Activated T-helper 2 cell treated with anti-CD3 and anti-CD28 coated beads, Interferon-gamma antibody, Interleukin-2, Interleukin-4, amounts not matched to agents 10 μg/mL and 5 μg/mL and 100 μg/mL, durations not matched to agents 14 hours and 24 hours and 36 hours (primary cell): ENCODE measurements at regions of chr4 and their contacts with region 1.

Region 1: GRCh38 chr4:6986781-6987587 is 56.2 kb upstream of the TADA2B start:
- DNase-seq: peak; percentile 91
- H3K4me3 Mint-ChIP-seq: peak overlapping the region; percentile 98
- H3K27ac Mint-ChIP-seq: peak overlapping the region; percentile 92
- H3K4me1 Mint-ChIP-seq: peaks cover 58% of the 10 kb centered on the region
- H3K27me3 Mint-ChIP-seq: no peaks in the 10 kb centered on the region

Region 2: GRCh38 chr4:6783053-6783981 is 203.7 kb before region 1 on chr4:
- intact Hi-C with region 1: loop called (anchors 2 kb)
- DNase-seq: peak; percentile 86
- H3K4me3 Mint-ChIP-seq: peak overlapping the region; percentile 79
- H3K27ac Mint-ChIP-seq: peak overlapping the region; percentile 75
- H3K4me1 Mint-ChIP-seq: peaks cover 55% of the 10 kb centered on the region
- H3K27me3 Mint-ChIP-seq: no peaks in the 10 kb centered on the region

Region 3: DNA sequence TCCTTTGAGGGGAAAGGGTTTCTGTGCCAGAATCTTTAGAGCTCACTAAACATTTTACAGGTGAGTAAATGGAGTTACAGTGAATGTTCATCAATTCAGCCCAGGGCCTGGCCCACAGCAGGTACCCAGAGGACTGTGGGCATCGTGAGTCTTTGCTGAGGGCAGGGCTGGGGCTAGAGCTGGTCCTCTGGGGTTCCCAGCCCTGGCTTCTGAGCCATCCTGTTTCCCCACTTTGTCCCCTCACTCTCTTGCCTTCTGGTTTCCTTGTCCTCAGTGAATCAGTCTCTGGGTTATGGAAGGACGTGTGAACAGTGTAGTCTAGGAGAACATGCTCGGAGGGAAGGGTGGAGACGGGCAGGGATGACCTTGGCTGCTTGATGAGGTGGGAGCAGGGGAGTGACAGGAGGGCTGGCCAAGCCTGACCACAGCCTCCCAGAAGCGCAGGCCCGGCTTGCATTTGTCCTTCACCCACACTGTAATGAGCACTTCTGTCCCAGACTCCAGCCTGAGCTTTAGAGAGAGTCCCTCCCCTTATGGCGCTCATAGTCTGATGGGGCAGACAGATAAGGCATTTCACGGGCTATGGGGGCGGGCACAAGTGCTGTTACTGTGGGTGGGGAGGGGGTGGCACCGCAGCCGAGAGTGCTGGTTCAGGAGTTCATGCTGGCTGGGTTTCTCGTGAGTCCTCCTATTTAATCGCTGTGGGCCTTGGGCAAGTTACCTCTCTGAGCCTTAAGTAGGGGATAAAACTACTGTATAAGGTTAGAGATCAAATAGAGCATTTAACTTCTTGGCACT is 60.1 kb before region 1 on chr4:
- intact Hi-C with region 1: loop called (anchors 5 kb)
- DNase-seq: peak; percentile 48
- H3K4me3 Mint-ChIP-seq: peak overlapping the region; percentile 62
- H3K27ac Mint-ChIP-seq: peak overlapping the region; percentile 36
- H3K4me1 Mint-ChIP-seq: peaks cover 39% of the 10 kb centered on the region
- H3K27me3 Mint-ChIP-seq: no peaks in the 10 kb centered on the region

Region 4: GRCh38 chr4:7004331-7004730 is 17.3 kb after region 1 on chr4:
- intact Hi-C with region 1: no loop called
- DNase-seq: no peak
- H3K4me3 Mint-ChIP-seq: no peak overlapping the region
- H3K27ac Mint-ChIP-seq: no peak overlapping the region
- H3K4me1 Mint-ChIP-seq: peaks cover 13% of the 10 kb centered on the region
- H3K27me3 Mint-ChIP-seq: no peaks in the 10 kb centered on the region

Region 5: DNA sequence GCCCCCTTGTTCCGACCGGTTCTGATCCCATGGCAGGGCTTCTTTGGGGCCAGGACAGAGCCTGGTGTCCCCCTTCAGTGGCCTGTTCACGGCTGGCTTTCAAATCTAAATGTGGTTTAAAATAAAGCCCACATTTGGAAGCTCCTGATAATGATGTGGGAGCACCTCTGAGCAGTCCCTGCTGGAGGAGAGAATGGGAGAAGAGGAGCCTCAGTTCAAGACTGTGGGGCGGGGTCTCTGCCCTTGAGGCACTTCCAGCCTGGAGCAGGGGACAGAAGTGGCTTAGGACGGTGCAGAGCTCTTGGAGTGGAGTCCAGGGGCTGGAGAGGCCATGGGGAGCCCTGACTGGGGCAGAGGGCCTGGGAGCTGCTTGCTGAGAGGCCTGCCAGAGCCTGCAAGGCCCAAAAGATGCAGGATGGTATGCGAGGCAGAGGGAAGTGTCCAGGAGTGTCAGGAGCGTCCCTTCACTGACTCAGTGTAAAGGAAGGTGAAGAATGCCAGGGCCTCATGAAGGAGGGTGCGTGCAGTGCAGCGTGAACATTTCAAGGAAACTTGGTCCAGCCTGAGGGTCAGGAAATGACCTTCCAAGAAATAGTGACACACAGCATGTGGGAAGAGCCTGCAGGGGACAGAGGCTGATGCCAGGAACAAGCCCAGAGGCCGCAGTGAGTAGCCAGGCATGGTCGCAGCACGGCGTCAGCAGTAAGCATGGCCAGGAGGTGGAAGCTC is 35.1 kb after region 1 on chr4:
- intact Hi-C with region 1: no loop called
- DNase-seq: no peak
- H3K4me3 Mint-ChIP-seq: no peak overlapping the region
- H3K27ac Mint-ChIP-seq: no peak overlapping the region
- H3K4me1 Mint-ChIP-seq: no peaks in the 10 kb centered on the region
- H3K27me3 Mint-ChIP-seq: no peaks in the 10 kb centered on the region

Region 6: DNA sequence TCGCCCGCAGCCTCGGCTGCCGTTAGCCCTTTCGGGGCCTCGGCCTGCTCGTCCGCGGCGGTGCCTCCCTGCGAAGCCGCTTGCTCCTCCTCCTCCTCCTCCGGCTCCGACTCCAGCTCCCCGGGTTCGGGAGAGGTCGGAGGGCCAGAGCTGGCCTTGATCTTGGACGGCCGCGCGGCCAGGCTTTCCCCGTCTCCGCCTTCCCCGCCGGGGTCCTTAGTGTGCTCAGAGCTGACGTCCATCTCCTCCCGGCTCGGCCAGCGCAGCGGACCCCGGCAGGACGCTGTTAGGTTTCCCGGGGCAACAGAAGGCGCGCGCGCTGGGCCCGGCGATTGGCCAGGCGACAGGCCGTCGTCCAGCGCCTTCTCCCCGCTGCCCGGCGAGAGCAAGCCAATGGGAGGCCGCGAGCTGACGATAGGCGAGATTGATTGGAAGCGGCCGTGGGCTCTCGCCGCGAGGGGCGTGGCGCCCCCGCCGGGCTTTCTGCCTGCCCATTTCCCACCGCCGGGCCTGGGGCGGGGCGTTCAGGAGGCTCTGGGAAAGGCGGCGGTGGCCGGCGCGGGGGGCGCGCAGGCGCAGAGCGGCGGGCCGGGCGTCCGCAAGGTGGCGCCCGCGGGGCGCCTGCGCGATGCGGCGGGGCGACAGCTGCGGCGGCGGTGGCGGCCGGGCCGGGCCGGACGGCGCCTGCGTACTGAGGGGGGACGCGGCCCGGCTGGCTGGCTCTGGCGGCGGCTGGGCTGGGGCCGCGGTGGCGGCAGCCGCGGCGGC is 55.9 kb after region 1 on chr4 and contains the start of gene TADA2B:
- intact Hi-C with region 1: loop called (anchors 1 kb)
- DNase-seq: peak; percentile 94
- H3K4me3 Mint-ChIP-seq: peak within 1 kb of the TSS; percentile 86
- H3K27ac Mint-ChIP-seq: peak within 1 kb of the TSS; percentile 65
- H3K4me1 Mint-ChIP-seq: peaks cover 38% of the 10 kb centered on the region
- H3K27me3 Mint-ChIP-seq: peaks cover 7% of the 10 kb centered on the region
- total RNA-seq, gene TADA2B: 12.9 and 13.3 TPM in 2 replicates

Region 7: DNA sequence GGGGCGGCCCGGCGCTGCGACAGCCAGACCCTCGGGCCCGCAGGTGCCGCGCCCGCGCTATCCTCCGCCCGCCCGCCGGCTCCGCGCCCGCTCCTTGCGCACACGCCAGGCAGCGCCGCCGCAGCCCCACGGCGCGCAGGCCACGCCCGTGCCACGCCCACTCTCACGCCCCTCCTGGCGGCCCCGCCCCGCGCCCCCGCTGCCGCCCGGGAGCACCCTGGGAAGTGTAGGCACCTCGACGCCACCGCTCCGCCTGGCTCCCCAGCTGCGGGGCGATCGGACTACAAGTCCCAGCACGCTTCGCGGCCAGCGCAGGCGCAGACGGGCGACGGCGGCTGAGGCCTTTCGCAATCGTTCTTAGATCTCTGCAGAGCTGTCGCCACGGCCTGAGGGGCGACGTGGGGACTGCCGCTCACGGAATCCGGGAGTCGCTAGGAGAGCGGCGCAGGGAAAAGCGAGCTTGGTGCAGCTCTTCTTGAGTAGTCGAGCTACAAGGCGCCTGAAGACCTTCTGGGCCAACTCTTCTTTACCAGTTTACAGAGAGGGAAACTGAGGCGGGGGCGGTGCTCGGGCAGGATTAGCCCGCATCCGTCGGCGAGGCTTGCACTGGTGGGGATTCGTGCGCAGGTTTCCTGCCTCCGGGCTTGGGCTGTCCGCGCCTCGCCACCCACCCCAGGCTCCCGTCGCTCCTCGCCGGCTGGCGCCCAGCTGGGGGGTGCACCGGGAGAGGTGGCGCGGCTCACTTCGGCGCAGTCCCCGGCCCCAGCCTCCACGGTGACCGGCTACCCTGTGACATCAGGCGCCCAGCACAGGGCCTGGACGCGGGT is 1171.9 kb after region 1 on chr4 and contains the start of gene ABLIM2:
- intact Hi-C with region 1: loop called (anchors 2 kb)
- DNase-seq: peak; percentile 98
- H3K4me3 Mint-ChIP-seq: peak within 1 kb of the TSS; percentile 97
- H3K27ac Mint-ChIP-seq: peak within 1 kb of the TSS; percentile 24
- H3K4me1 Mint-ChIP-seq: peaks cover 5% of the 10 kb centered on the region
- H3K27me3 Mint-ChIP-seq: peaks cover 23% of the 10 kb centered on the region
- total RNA-seq, gene ABLIM2: 0.32 and 0.60 TPM in 2 replicates